Activated naive CD4-positive, alpha-beta T cell treated with anti-CD3 and anti-CD28 coated beads for 36 hours (primary cell): ENCODE measurements at regions of chr5 and their contacts with region 1.

Region 1: DNA sequence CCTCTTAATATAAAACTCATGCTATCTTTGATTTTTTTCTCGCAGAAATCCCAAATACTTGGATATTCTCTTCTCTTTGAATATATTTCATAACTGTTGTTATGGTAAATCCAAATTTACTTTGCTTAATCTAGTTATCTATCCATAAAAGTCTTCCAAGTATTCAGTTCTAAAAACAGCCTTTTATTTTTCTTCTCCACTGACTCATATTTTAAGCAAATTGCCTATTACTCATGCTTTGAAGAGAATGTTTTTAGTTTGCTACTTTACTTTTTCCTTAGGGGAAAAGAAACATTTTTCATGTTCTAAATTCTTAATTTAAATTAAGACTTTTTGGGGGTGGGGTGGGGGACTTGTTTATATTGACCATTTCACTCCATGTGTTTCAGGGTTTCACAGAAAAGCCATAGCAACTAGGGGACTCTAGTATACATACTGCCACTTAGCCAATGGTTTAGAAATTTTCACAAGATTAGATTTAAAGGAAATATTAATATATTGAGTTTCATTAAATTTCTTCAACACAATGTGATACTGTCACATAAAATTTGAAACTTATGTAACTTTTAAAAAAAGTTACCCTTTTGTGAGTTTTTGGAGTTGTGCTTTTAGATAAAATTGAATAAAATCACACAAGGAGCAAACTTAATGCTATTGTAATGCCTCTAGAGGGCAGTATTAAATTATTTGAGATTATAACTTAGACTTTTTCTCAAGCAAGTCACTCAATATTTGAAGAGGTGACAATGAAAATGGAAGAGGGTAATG is 545.8 kb upstream of the ARRDC3 start:
- DNase-seq: no peak
- H3K4me3 Mint-ChIP-seq: no peak overlapping the region
- H3K27ac Mint-ChIP-seq: no peak overlapping the region
- H3K4me1 Mint-ChIP-seq: no peaks in the 10 kb centered on the region
- H3K27me3 Mint-ChIP-seq: no peaks in the 10 kb centered on the region

Region 2: DNA sequence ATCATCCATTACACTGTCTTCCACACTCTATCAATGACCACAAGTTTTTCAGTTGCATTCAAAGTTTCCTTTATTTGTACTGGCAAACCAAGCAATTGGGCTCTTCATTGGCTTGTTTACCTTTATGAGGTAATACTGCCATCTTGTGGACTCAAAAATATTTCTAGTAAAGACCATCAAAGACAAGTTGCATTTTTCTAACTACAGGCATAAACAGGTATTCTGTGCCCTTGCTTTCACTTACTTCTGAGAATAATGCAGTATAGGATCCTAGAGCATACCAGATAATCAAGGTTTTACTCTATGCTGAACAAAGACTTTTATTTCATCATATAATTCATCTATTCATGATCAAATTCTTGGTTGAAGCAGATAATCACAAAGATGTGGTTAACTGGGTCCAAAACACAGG is 1986.2 kb after region 1 on chr5:
- CTCF ChIA-PET with region 1: no interaction called
- intact Hi-C with region 1: loop called (anchors 10 kb)
- DNase-seq: no peak
- H3K4me3 Mint-ChIP-seq: no peak overlapping the region
- H3K27ac Mint-ChIP-seq: no peak overlapping the region
- H3K4me1 Mint-ChIP-seq: no peaks in the 10 kb centered on the region
- H3K27me3 Mint-ChIP-seq: no peaks in the 10 kb centered on the region